ENCODE measurements at regions of chr5 and their contacts with region 1.

Region 1: DNA sequence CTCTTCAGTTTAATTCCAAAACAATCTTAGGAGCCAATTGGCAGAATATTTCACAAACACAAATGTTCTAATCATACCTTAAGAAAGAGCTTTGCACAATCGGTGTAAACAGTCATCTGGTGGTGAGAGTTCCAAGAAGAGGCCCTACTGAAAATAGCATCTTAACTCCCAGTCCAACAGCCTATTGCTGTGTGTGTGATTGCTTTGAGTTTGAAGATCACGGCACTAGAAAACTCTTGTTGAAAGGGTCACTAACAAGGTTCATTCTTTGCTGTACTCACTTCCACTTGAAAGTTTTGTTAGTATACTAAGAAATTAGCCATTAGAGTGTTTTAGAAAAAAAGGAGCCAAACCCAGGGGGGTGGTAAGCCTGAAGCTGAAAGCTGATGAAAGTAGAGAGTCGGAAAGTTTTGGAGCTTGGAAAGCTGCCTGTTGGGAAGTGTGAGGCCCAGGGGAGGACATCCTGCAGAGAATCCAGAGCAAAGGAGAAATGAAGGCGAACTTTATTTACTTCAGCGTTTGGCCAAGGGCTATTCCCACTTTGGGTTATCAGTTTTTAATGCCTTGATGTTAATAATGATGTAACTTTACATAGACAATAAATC is 180.3 kb upstream of the GHR start:
- DNase-seq: no peak
- ATAC-seq: no peak
- H3K4me3 ChIP-seq: no peak overlapping the region
- H3K27ac ChIP-seq: peak overlapping the region; percentile 82
- H3K4me1 ChIP-seq: peaks cover 31% of the 10 kb centered on the region
- H3K27me3 ChIP-seq: no peaks in the 10 kb centered on the region
- CTCF ChIP-seq: no peak

Region 2: DNA sequence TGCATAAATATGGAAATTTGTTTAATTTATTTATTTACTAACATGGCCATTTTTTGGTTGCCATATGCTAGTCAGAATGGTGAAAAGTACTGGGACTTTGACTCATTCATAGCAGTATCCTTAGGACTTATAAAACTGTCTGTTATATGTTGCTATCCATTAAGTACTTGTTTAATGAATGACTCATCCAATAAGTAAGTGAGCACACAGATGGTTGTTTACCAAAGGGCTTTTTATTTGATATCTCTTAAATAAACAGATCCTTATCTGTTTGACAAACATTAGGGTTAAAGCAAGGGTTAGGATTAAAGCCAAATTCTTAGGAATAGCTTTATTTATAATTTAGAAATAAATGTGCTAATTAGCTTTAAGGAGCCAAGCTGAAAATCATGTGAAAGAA is 134.5 kb before region 1 on chr5:
- CTCF ChIA-PET with region 1: no interaction called
- POLR2A ChIA-PET with region 1: no interaction called
- intact Hi-C with region 1: loop called (anchors 1 kb)
- DNase-seq: peak; percentile 90
- ATAC-seq: peak; percentile 92
- H3K4me3 ChIP-seq: no peak overlapping the region
- H3K27ac ChIP-seq: peak overlapping the region; percentile 76
- H3K4me1 ChIP-seq: peaks cover 29% of the 10 kb centered on the region
- H3K27me3 ChIP-seq: no peaks in the 10 kb centered on the region; the same call in 1 of the 2 replicates
- CTCF ChIP-seq: no peak

Region 3: GRCh38 chr5:42168091-42168670 is 74.8 kb before region 1 on chr5:
- CTCF ChIA-PET with region 1: no interaction called
- POLR2A ChIA-PET with region 1: no interaction called
- intact Hi-C with region 1: no loop called
- DNase-seq: peak; percentile 53
- ATAC-seq: no peak
- H3K4me3 ChIP-seq: no peak overlapping the region
- H3K27ac ChIP-seq: no peak overlapping the region
- H3K4me1 ChIP-seq: peaks cover 6% of the 10 kb centered on the region; the same call in 1 of the 2 replicates
- H3K27me3 ChIP-seq: 0 out of 2 replicates have a peak, but pooled peaks cover 2% of the 10 kb centered on the region
- CTCF ChIP-seq: no peak

Region 4: GRCh38 chr5:42216904-42217303 is 26.1 kb before region 1 on chr5:
- CTCF ChIA-PET with region 1: no interaction called
- POLR2A ChIA-PET with region 1: no interaction called
- intact Hi-C with region 1: no loop called
- DNase-seq: no peak
- ATAC-seq: no peak
- H3K4me3 ChIP-seq: no peak overlapping the region
- H3K27ac ChIP-seq: no peak overlapping the region
- H3K4me1 ChIP-seq: no peaks in the 10 kb centered on the region
- H3K27me3 ChIP-seq: no peaks in the 10 kb centered on the region
- CTCF ChIP-seq: no peak

Region 5: DNA sequence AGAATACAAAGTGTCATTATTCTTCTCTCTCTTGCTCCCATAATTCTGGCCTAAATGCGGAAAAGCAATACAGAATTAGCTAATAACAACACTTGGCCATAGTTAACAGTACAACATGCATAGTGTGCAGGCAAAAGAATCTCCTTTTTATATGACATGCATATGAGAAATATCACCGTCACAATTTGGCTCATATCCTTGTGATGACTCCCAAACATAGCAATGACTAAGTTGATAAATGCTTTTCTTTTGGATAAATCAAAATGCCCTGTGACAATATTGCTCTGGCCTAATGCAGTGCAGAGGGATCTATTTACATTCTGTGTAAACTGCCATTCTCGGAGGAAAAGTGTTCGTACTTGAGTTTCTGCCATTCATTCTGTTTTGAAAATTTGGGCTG is 58.4 kb after region 1 on chr5:
- CTCF ChIA-PET with region 1: no interaction called
- POLR2A ChIA-PET with region 1: no interaction called
- intact Hi-C with region 1: loop called (anchors 1 kb)
- DNase-seq: peak; percentile 98
- ATAC-seq: peak; percentile 90
- H3K4me3 ChIP-seq: peak overlapping the region; percentile 26
- H3K27ac ChIP-seq: peak overlapping the region; percentile 79
- H3K4me1 ChIP-seq: peaks cover 28% of the 10 kb centered on the region
- H3K27me3 ChIP-seq: no peaks in the 10 kb centered on the region
- CTCF ChIP-seq: no peak

Region 6: DNA sequence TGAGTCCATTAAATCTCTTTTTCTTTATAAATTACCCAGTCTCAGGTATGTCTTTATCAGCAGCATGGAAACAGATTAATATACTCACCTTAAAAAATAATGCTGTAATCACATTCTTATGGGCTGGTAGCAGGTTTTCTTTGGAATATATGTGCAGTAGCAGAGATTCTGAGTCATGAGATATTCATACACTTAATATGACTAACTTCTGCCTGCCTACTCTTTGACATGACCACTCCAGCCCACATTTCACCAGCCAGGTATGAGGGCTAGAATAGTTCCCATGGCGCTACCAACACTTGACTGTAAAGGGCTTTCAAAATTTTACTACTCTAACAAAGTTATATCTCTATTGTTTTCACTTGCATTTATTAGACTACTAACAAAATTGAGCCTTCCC is 106.2 kb after region 1 on chr5:
- CTCF ChIA-PET with region 1: no interaction called
- POLR2A ChIA-PET with region 1: no interaction called
- intact Hi-C with region 1: no loop called
- DNase-seq: peak; percentile 61
- ATAC-seq: peak; percentile 57
- H3K4me3 ChIP-seq: no peak overlapping the region
- H3K27ac ChIP-seq: no peak overlapping the region
- H3K4me1 ChIP-seq: no peaks in the 10 kb centered on the region
- H3K27me3 ChIP-seq: no peaks in the 10 kb centered on the region
- CTCF ChIP-seq: no peak

Region 7: GRCh38 chr5:42360056-42360455 is 117.1 kb after region 1 on chr5:
- CTCF ChIA-PET with region 1: no interaction called
- POLR2A ChIA-PET with region 1: no interaction called
- intact Hi-C with region 1: loop called (anchors 1 kb)
- DNase-seq: peak; percentile 95
- ATAC-seq: peak; percentile 93
- H3K4me3 ChIP-seq: peak overlapping the region; percentile 4; the same call in 1 of the 2 replicates
- H3K27ac ChIP-seq: peak overlapping the region; percentile 86
- H3K4me1 ChIP-seq: peaks cover 26% of the 10 kb centered on the region
- H3K27me3 ChIP-seq: no peaks in the 10 kb centered on the region
- CTCF ChIP-seq: no peak